ENCODE measurements at regions of chr11 and their contacts with region 1.

Region 1: DNA sequence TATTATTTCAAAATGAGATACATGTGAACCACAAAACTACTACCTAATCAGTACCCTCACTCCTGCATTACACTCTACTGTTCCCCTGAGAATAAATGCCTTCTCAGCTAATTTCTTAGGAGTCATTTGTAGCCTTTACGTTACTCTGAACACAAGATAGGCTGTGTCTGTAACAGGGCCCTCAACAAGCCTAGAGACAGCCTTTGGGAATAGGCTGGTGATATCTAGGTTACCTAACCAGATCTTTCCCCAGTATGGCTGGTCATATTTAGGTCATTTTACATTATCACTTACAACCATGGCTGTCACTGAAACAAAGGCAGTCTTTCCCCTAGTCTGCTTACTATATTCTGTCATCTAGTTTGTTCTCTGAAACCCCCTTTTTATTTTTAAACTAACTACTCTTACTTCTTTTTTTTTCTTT is 14.2 kb downstream of the ATM start:
- DNase-seq: no peak
- ATAC-seq: peak; percentile 68
- H3K4me3 Mint-ChIP-seq: peak overlapping the region; percentile 67
- H3K27ac Mint-ChIP-seq: peak overlapping the region; percentile 91
- H3K4me1 Mint-ChIP-seq: peaks cover 53% of the 10 kb centered on the region
- H3K27me3 Mint-ChIP-seq: no peaks in the 10 kb centered on the region
- CTCF ChIP-seq: no peak

Region 2: GRCh38 chr11:108160970-108161566 is 76.0 kb before region 1 on chr11:
- CTCF ChIA-PET with region 1: no interaction called
- POLR2A ChIA-PET with region 1: no interaction called
- intact Hi-C with region 1: loop called (anchors 1 kb)
- DNase-seq: no peak
- ATAC-seq: peak; percentile 100
- H3K4me3 Mint-ChIP-seq: no peak overlapping the region
- H3K27ac Mint-ChIP-seq: peak overlapping the region; percentile 87
- H3K4me1 Mint-ChIP-seq: peaks cover 13% of the 10 kb centered on the region
- H3K27me3 Mint-ChIP-seq: no peaks in the 10 kb centered on the region
- CTCF ChIP-seq: no peak

Region 3: DNA sequence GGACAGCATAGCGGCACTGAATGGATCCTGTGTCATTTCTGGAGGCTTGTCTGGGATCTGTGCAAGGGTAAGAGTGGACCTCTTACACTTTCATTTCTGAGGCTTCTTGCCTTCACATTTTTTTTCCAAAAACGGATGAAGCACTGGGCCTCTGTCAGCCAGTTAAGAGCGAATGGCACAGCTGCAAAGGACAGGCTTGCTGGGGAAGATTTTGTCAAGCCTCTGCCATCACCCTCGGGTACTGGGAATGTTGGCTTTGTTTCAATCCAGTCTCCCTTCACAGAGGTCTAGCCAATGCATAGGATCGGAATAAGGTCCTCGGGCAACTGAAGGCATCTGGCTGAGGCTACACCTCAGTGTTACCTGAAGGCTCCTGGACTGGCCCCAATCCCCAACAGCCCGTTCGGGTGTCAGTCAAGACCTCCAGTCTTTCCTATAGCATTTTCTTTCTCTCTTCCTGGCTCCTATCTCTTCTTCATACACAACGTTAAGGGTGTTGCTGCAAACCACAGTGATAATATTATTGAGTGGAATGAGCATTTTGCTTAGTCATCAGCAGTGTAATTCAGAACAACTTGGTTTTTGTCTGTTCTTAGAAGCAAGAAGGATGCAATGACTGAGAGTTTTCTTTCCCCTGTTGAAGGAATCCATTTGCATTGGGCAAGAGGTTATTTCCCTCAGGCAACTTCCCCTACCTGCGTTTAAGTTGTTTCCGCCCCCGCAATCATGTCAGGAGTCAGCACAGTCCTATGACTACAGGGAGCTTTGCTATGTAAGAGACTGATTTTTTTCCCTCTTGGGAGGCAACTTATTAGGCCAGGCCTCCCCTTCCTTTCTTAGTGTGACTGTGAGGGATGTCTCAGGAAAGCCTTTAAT is 37.4 kb before region 1 on chr11:
- CTCF ChIA-PET with region 1: no interaction called
- POLR2A ChIA-PET with region 1: no interaction called
- intact Hi-C with region 1: loop called (anchors 1 kb)
- DNase-seq: no peak
- ATAC-seq: peak; percentile 91
- H3K4me3 Mint-ChIP-seq: peak overlapping the region; percentile 9
- H3K27ac Mint-ChIP-seq: peak overlapping the region; percentile 69
- H3K4me1 Mint-ChIP-seq: peaks cover 74% of the 10 kb centered on the region
- H3K27me3 Mint-ChIP-seq: no peaks in the 10 kb centered on the region
- CTCF ChIP-seq: no peak

Region 4: DNA sequence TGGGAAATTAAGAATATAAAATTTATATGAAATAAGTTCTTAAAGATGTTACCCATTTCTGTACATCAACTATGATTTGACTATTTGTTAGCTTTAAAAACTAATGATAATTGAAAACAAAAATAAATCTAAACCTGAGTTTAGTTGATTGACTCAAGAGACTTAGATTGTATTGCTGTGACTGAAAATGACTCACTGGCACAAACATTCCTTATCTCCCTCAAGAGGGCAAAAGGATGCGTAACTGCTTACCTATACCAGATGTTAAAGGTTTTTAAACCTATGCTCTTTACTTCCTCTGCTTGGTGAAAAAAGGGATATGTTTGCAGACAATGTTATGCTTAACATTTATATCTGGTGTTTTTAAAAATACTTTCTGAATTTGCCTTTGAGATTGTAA is 16.1 kb after region 1 on chr11:
- CTCF ChIA-PET with region 1: no interaction called
- POLR2A ChIA-PET with region 1: interaction called, 9 read pairs
- intact Hi-C with region 1: loop called (anchors 2 kb)
- DNase-seq: no peak
- ATAC-seq: no peak
- H3K4me3 Mint-ChIP-seq: no peak overlapping the region
- H3K27ac Mint-ChIP-seq: no peak overlapping the region
- H3K4me1 Mint-ChIP-seq: no peaks in the 10 kb centered on the region
- H3K27me3 Mint-ChIP-seq: no peaks in the 10 kb centered on the region
- CTCF ChIP-seq: no peak

Measured in activated B cell treated with CpG ODN at 0.5 μM for 24 hours (primary cell).